ENCODE measurements at regions of chr3 and their contacts with region 1.

Region 1: DNA sequence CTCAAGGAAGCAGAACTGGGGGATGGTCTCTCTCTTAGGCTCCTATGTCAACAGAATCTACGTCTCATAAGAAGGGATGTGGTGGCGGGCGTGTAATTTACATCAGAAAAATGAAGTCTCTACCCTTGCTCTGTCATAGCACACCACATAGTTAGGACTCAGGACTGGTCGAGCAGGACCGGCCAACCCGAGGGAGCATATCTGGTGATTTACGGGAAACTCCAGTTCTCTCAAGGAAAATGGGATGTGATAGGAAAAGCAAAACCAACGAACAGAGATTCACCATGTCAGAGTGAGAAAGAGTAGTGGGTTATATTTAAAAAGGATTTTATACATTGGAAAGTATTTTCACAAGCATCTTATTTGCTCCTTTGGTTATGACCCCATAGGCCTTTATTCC is 54.7 kb downstream of the IGF2BP2 start:
- H3K4me3 ChIP-seq: no peak overlapping the region
- H3K27ac ChIP-seq: no peak overlapping the region
- H3K4me1 ChIP-seq: peaks cover 4% of the 10 kb centered on the region; the same call in 1 of the 2 replicates
- CTCF ChIP-seq: no peak

Region 2: GRCh38 chr3:185733980-185734724 is 36.0 kb before region 1 on chr3:
- CTCF ChIA-PET with region 1: interaction called, 39 read pairs
- POLR2A ChIA-PET with region 1: no interaction called
- H3K4me3 ChIP-seq: no peak overlapping the region
- H3K27ac ChIP-seq: no peak overlapping the region
- H3K4me1 ChIP-seq: peaks cover 14% of the 10 kb centered on the region; the same call in 1 of the 2 replicates
- CTCF ChIP-seq: peak; percentile 31; the same call in 1 of the 2 replicates

Measured in HEK293 (cell line).